GM12878 (cell line): ENCODE measurements at regions of chr17 and their contacts with region 1.

Region 1: DNA sequence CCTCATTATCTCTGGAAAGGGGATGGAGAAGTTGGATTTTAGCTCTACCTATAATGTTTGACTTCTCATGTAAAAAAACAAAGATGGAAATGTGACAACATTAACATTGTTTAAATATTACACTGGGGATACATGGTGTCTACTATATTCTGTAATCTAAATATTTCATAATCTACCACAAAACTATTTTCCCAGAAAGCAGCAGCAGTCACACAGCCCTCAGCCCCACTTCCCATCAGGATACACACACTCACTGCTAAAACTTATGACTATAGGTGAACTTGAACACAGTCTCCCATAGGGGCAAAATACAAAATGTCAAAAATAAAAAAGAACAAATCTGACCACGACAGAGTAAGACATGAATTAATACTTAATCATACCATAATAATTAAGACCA is 95.7 kb downstream of the KANSL1 start:
- DNase-seq: no peak
- ATAC-seq: no peak
- H3K4me3 ChIP-seq: no peak overlapping the region
- H3K27ac ChIP-seq: no peak overlapping the region
- H3K4me1 ChIP-seq: peaks cover 19% of the 10 kb centered on the region; the same call in 1 of the 2 replicates
- H3K27me3 ChIP-seq: no peaks in the 10 kb centered on the region
- CTCF ChIP-seq: no peak
- EP300 ChIP-seq: no peak
- POLR2A ChIP-seq: no peak
- RAD21 ChIP-seq: no peak

Region 2: GRCh38 chr17:46082257-46082656 is 15.2 kb before region 1 on chr17:
- CTCF ChIA-PET with region 1: no interaction called
- POLR2A ChIA-PET with region 1: no interaction called
- RAD21 ChIA-PET with region 1: interaction called, 3 read pairs
- SMC1A ChIA-PET with region 1: interaction called, 13 read pairs
- in situ Hi-C with region 1: no loop called
- intact Hi-C with region 1: no loop called
- DNase-seq: no peak
- ATAC-seq: no peak
- H3K4me3 ChIP-seq: no peak overlapping the region
- H3K27ac ChIP-seq: no peak overlapping the region
- H3K4me1 ChIP-seq: no peaks in the 10 kb centered on the region
- H3K27me3 ChIP-seq: no peaks in the 10 kb centered on the region
- CTCF ChIP-seq: no peak
- EP300 ChIP-seq: no peak
- POLR2A ChIP-seq: no peak
- RAD21 ChIP-seq: no peak

Region 3: DNA sequence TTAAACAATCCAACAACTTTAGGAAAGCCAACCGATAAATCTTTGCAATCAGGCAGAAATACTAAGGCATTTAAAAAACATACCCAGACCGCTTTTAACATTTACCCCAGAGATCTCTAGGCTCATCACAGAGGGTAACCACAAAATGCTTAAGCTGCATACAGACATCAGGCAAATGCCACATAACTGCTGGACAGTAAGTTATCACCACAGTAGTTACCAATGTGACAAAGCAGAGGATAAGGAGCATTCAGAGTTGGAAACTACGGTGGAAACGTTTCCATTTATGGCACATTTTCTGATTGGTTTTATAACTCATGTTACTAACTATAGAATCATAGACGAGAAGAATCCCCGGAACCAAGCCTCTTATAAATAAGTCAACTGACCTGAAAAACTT is 18.2 kb after region 1 on chr17:
- CTCF ChIA-PET with region 1: interaction called, 19 read pairs
- POLR2A ChIA-PET with region 1: interaction called, 4 read pairs
- RAD21 ChIA-PET with region 1: interaction called, 3 read pairs
- SMC1A ChIA-PET with region 1: interaction called, 88 read pairs
- in situ Hi-C with region 1: no loop called
- intact Hi-C with region 1: no loop called
- DNase-seq: no peak
- ATAC-seq: no peak
- H3K4me3 ChIP-seq: no peak overlapping the region
- H3K27ac ChIP-seq: no peak overlapping the region
- H3K4me1 ChIP-seq: peaks cover 17% of the 10 kb centered on the region
- H3K27me3 ChIP-seq: no peaks in the 10 kb centered on the region
- CTCF ChIP-seq: no peak
- EP300 ChIP-seq: no peak
- POLR2A ChIP-seq: no peak
- RAD21 ChIP-seq: no peak

Region 4: DNA sequence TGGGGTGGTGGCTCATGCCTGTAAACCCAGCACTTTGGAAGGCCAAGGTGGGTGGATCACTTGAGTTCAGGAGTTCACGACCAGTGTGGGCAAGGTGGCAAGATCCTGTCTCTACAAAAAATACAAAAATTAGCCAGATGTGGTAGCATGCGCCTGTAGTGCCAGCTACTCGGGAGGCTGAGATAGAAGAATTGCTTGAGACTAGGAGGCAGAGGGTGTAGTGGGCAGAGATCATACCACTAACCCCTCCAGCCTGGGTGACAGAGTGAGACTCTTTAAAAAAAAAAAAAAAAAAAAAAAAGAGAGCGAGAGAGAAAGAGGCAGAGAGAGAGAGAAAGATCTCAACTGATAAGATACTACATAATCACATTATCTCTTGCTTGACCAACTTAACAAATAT is 49.8 kb after region 1 on chr17:
- CTCF ChIA-PET with region 1: interaction called, 3 read pairs
- POLR2A ChIA-PET with region 1: interaction called, 6 read pairs
- RAD21 ChIA-PET with region 1: interaction called, 11 read pairs
- SMC1A ChIA-PET with region 1: interaction called, 12 read pairs
- in situ Hi-C with region 1: no loop called
- intact Hi-C with region 1: loop called (anchors 5 kb)
- DNase-seq: no peak
- ATAC-seq: peak; percentile 4
- H3K4me3 ChIP-seq: peak overlapping the region; percentile 17; the same call in 1 of the 2 replicates
- H3K27ac ChIP-seq: peak overlapping the region; percentile 65
- H3K4me1 ChIP-seq: peaks cover 73% of the 10 kb centered on the region
- H3K27me3 ChIP-seq: no peaks in the 10 kb centered on the region
- CTCF ChIP-seq: no peak
- EP300 ChIP-seq: no peak
- POLR2A ChIP-seq: no peak
- RAD21 ChIP-seq: no peak

Region 5: DNA sequence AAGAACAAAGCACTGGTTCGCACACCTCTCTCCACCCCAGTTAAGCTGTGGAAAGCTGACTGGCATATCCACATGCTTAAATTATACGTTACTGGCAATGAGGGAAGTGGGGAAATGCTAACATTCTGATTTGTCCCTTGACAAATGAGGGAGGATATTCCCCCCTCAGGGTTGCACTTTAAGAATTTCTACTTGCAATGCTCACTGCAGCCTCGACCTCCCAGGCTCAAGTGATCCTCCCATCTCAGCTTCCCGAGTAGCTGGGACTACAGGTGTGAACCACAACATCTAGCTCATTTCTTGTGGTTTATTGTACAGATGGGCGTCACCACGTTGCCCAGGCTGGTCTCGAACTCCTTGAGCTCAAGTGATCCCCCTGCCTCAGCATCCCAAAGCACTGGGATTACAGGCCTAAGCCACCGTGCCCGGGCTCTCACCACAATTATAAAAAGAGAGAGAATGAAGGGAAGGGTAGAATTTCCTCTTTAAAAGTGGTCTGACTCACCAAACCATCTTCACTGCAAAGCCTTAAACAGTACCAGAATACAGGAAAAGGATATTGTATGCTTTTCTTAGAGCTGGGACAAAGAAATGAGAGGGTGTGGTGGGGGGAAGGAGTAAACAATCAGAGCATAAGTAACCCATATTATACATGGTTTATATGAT is 56.8 kb after region 1 on chr17:
- CTCF ChIA-PET with region 1: interaction called, 4 read pairs
- POLR2A ChIA-PET with region 1: interaction called, 6 read pairs
- RAD21 ChIA-PET with region 1: interaction called, 4 read pairs
- SMC1A ChIA-PET with region 1: interaction called, 10 read pairs
- in situ Hi-C with region 1: no loop called
- intact Hi-C with region 1: loop called (anchors 5 kb)
- DNase-seq: no peak
- ATAC-seq: no peak
- H3K4me3 ChIP-seq: no peak overlapping the region
- H3K27ac ChIP-seq: peak overlapping the region; percentile 29
- H3K4me1 ChIP-seq: peaks cover 90% of the 10 kb centered on the region
- H3K27me3 ChIP-seq: no peaks in the 10 kb centered on the region
- CTCF ChIP-seq: no peak
- EP300 ChIP-seq: no peak
- POLR2A ChIP-seq: no peak
- RAD21 ChIP-seq: no peak

Region 6: DNA sequence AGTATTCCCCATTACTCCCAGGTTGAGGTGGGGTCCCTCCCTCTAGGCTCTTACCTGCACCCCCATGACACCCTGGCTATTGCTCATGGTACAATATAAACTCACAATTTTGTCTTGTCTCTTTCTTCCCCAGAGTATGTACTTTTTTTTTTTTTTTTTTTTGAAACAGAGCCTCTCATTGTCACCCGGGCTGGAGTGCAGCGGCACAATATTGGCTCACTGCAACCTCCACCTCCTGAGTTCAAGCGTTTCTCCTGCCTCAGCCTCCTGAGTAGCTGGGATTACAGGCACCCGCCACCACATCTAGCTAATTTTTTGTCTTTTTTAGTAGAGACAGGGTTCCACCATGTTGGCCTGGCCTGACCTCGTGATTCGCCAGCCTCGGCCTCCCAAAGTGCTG is 87.2 kb after region 1 on chr17:
- CTCF ChIA-PET with region 1: interaction called, 41 read pairs
- POLR2A ChIA-PET with region 1: interaction called, 3 read pairs
- RAD21 ChIA-PET with region 1: interaction called, 13 read pairs
- SMC1A ChIA-PET with region 1: interaction called, 44 read pairs
- in situ Hi-C with region 1: no loop called
- intact Hi-C with region 1: no loop called
- DNase-seq: no peak
- ATAC-seq: no peak
- H3K4me3 ChIP-seq: no peak overlapping the region
- H3K27ac ChIP-seq: no peak overlapping the region
- H3K4me1 ChIP-seq: peaks cover 37% of the 10 kb centered on the region
- H3K27me3 ChIP-seq: no peaks in the 10 kb centered on the region
- CTCF ChIP-seq: no peak
- EP300 ChIP-seq: no peak
- POLR2A ChIP-seq: no peak
- RAD21 ChIP-seq: no peak

Region 7: GRCh38 chr17:46193626-46194392 is 96.3 kb after region 1 on chr17:
- CTCF ChIA-PET with region 1: interaction called, 8 read pairs
- POLR2A ChIA-PET with region 1: interaction called, 4 read pairs
- RAD21 ChIA-PET with region 1: no interaction called
- SMC1A ChIA-PET with region 1: no interaction called
- in situ Hi-C with region 1: no loop called
- intact Hi-C with region 1: loop called (anchors 5 kb)
- DNase-seq: peak; percentile 88
- ATAC-seq: peak; percentile 90
- H3K4me3 ChIP-seq: peak overlapping the region; percentile 87
- H3K27ac ChIP-seq: peak overlapping the region; percentile 98
- H3K4me1 ChIP-seq: peaks cover 32% of the 10 kb centered on the region
- H3K27me3 ChIP-seq: no peaks in the 10 kb centered on the region
- CTCF ChIP-seq: peak in 2 of 3 experiments; percentile 13 to 26; a peak in 3 of 6 replicates
- EP300 ChIP-seq: peak in 1 of 2 experiments; percentile 7; a peak in 1 of 4 replicates
- POLR2A ChIP-seq: peak; percentile 85
- RAD21 ChIP-seq: no peak